ENCODE measurements at regions of chr2 and their contacts with region 1.

Region 1: DNA sequence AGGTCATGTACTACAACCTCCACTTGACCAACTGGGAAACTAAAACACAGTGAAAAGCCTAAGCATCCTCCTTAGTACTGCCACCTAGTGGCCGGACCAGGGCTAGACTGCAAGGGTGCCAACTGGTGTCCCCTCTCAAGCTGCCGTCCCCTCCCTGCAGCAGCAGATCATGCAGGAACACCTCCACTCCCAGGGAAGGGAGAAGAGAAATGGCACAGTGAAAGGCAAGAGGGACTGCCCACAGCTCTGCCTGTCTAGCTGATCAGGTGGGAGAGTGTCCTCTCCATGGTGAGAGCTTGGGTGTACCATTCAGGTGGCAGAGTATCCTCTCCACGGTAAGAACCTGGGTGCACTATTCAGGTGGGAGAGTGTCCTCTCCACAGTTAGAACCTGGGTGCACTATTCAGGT is 78.1 kb downstream of the AAK1 start:
- DNase-seq: peak; percentile 76
- CTCF ChIP-seq: peak; percentile 90

Region 2: DNA sequence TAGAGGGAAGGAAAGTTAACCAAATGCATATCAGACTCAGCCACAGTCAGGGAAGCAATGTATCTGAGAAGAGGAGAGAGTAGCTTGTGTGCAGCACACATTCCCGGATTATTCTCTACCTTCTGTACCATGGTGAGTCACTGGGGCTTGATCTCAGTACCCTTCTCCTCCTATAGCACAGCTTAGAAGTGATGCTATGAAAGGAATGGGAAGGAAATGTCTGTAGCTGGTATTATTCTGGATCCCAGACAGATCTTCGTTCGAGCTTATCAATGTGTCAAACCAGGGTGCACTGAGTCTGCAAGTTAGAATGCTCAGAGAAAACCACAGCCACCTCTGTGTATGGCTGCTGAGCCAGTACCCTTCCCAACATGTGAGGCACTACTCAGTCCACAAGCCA is 40.2 kb before region 1 on chr2:
- CTCF ChIA-PET with region 1: interaction called, 12 read pairs
- POLR2A ChIA-PET with region 1: no interaction called
- DNase-seq: no peak
- CTCF ChIP-seq: no peak

Region 3: DNA sequence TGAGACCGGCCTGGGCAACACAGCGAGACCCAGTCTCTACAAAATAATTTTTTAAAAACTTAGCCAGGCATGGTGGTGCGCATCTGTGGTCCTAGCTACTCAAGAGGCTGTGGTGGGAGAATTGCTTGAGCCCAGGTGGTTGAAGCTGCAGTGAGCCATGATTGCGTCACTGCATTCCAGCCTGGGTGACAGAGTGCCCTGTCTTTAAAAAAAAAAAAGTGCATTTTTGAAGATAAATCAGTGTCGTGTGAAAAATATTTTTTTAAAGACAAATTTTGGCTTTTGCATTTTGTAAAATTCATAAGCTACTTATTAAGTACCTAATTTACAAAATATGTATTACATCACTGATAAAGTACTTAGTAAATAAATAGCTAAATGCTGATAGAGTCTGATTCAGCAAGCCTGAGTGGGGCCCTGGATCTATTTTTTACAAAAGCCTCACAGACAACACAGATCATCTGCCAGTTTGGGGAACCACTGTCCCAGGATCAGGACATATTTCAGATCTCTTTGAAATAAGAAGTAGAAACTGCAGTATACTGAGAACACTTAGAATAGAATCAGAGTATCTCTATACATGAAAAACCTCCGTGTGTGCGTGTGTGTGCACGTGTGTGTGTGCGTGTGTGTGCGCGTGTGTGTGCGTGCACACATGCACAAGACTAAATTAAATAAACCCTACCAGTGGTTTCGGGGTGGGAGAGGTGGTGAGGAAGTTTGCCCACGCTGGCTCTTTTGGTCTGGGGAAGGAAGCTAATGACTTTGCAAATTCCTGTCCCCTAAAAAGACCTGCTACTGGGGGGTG is 16.5 kb after region 1 on chr2:
- CTCF ChIA-PET with region 1: interaction called, 195 read pairs
- POLR2A ChIA-PET with region 1: no interaction called
- DNase-seq: peak; percentile 28
- CTCF ChIP-seq: no peak

Region 4: GRCh38 chr2:69604026-69604678 is 38.7 kb after region 1 on chr2:
- CTCF ChIA-PET with region 1: interaction called, 12 read pairs
- POLR2A ChIA-PET with region 1: no interaction called
- DNase-seq: no peak
- CTCF ChIP-seq: no peak

Region 5: GRCh38 chr2:69695850-69696216 is 130.4 kb after region 1 on chr2:
- CTCF ChIA-PET with region 1: interaction called, 14 read pairs
- POLR2A ChIA-PET with region 1: no interaction called
- DNase-seq: no peak
- CTCF ChIP-seq: no peak

Region 6: DNA sequence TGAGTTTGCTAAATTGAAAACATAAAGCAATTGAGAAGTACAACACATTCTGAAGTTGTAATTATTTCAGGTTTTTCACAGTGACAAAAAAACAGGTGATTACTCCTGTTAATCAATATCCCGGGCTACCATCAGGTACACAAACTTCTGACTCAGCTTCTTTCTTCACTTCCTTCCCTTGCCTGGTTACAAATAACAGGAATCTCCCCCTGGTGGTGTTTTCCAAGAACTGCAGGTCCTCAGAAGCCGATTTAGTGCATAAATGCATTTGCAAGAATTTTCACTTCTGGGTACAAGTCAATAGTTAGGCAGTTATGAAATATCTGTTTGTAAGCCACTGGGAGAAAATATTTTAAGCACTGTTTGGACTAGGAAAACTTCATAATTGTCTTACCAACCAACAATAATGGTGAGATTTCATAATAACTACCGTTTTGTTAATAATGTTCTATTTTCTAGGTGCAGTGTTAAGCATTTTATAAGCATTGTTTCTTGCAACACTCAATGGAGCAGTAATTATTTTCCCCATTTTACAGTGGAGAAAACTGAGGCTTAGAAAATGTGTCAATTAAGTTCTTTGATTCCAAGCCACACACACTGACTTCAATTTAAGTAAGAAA is 251.6 kb after region 1 on chr2:
- CTCF ChIA-PET with region 1: interaction called, 20 read pairs
- POLR2A ChIA-PET with region 1: no interaction called
- DNase-seq: peak; percentile 59
- CTCF ChIP-seq: peak; percentile 74

Region 7: DNA sequence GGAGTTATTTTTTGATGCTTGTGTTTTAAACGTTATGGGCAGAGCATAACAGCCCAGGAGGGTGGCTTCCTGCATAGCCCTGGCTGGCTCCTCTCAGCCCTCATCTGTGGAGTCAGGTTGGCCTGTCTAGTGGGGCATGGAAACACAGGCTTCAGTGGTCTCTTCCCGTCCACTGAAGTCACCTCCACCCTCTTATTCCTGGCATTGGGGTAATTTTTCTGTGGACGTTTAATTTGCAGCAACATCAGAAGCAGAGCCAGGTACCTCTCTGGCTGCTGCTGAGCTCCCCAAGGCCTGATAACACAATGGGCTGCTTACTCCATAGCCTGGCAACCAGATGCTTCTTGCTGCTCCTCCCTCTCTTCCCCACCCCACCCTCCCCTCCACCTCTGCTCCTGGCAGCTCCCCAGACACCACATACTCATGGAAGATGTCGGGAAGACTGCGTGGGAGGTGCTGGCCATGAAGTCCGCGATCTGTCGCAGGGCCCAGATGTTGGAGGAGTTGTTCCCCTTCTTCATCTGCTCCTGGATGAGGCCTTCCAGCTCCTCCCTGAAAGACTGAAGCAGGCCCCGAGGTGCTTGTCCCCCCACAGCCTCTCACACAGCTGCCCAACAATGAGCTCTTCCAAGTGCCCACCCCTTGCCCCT is 1138.6 kb after region 1 on chr2:
- CTCF ChIA-PET with region 1: no interaction called
- POLR2A ChIA-PET with region 1: no interaction called
- DNase-seq: no peak
- CTCF ChIP-seq: no peak